PC-9 (cell line): ENCODE measurements at regions of chr6 and their contacts with region 1.

Region 1: GRCh38 chr6:36302227-36302976 is 32.5 kb downstream of the PNPLA1 start:
- DNase-seq: peak; percentile 79 to 81
- H3K4me3 ChIP-seq: no peak overlapping the region
- H3K27ac ChIP-seq: no peak overlapping the region
- H3K4me1 ChIP-seq: peaks cover 9% of the 10 kb centered on the region; the same call in 1 of the 2 replicates
- H3K27me3 ChIP-seq: no peaks in the 10 kb centered on the region
- CTCF ChIP-seq: peak; percentile 93

Region 2: DNA sequence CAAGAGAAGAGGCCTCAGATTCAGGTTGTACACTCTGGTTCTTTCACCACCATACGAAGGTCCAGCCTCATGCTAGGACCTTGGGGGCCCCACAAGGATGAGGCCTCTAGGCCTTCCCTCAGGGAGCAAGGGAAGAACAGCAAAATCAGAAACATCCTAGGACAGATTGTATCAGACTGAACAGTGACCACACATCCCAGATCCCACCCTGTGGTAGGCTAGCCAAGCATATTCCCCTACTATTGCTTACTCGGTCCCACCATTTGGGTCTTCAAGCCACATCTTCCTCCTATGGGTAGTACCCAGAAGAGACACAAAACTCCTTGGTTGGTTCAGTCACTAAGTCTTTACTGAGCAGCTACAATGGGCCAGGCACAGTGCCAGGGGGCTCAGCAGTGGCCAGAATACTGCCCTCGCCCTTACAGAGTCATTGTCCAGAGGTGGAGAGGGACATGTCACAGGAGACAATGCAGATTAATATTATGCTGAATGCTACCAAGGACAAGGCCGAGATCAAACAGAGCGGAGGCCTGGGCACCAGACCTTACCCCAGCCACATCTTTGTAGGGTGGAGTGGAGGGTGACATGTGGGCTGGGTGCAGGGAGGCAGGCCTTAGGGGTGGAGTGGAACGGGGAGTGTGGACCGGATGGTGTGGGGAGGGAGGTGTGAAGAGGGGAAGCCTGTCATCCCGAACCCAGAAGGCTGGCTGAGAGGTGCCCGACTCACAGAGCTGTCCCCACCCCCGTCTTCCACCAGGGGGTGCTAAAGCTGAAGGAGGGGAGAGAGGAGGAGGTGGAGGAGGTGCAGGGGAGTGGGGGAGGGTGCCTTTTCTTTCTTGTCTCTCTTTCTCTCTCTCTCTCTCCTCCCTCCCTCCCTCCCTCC is 178.9 kb before region 1 on chr6:
- CTCF ChIA-PET with region 1: interaction called, 3 read pairs
- POLR2A ChIA-PET with region 1: no interaction called
- intact Hi-C with region 1: loop called (anchors 5 kb)
- DNase-seq: peak; percentile 48 to 75
- H3K4me3 ChIP-seq: no peak overlapping the region
- H3K27ac ChIP-seq: no peak overlapping the region
- H3K4me1 ChIP-seq: peaks cover 84% of the 10 kb centered on the region
- H3K27me3 ChIP-seq: no peaks in the 10 kb centered on the region
- CTCF ChIP-seq: peak; percentile 77

Region 3: GRCh38 chr6:36224904-36225461 is 77.4 kb before region 1 on chr6:
- CTCF ChIA-PET with region 1: no interaction called
- POLR2A ChIA-PET with region 1: no interaction called
- intact Hi-C with region 1: loop called (anchors 5 kb)
- DNase-seq: peak; percentile 43 to 84
- H3K4me3 ChIP-seq: peak overlapping the region; percentile 15; the same call in 1 of the 2 replicates
- H3K27ac ChIP-seq: peak overlapping the region; percentile 52
- H3K4me1 ChIP-seq: peaks cover 57% of the 10 kb centered on the region
- H3K27me3 ChIP-seq: no peaks in the 10 kb centered on the region
- CTCF ChIP-seq: no peak

Region 4: GRCh38 chr6:36360241-36361054 is 58.0 kb after region 1 on chr6:
- CTCF ChIA-PET with region 1: interaction called, 11 read pairs
- POLR2A ChIA-PET with region 1: interaction called, 5 read pairs
- intact Hi-C with region 1: loop called (anchors 1 kb)
- DNase-seq: peak; percentile 43 to 70
- H3K4me3 ChIP-seq: no peak overlapping the region
- H3K27ac ChIP-seq: no peak overlapping the region
- H3K4me1 ChIP-seq: 0 out of 2 replicates have a peak, but pooled peaks cover 7% of the 10 kb centered on the region
- H3K27me3 ChIP-seq: no peaks in the 10 kb centered on the region
- CTCF ChIP-seq: peak; percentile 90

Region 5: DNA sequence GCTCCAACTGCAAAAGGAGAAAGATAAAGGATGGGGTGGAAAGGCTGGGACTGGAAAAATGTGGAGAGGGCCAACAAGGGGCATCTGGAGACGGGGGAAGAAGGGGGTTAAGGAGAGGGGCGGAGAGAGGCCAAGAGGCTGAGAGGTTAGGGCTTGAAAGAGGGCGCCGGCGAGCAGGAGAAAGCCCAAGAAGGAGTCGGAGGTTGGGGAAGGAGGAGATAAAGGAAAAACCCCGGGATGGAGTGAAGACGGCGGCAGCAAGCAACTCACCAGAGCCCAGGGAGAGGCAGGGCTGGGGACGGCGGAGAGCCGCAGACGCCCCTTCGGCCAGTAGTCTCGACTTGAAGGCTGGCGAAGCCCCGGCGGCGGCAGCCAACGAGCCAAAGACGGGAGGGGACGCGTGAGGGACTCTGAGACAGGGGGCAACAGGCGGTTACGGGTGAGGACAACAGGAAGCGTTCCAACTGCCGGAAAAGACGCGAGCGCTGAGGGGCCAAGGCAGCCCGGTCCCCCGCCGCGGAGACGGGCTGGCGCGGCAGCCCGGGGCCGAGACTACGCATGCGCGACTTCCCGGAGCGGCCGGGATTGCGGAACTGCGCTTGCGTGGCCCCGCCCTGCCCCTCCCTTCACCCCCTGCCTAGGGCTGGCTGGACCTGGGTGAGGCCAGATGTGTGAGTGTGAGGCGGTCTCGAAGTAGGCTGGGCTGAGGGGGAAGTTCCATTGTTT is 244.7 kb after region 1 on chr6 and contains the start of gene STK38:
- CTCF ChIA-PET with region 1: interaction called, 14 read pairs
- POLR2A ChIA-PET with region 1: no interaction called
- intact Hi-C with region 1: no loop called
- DNase-seq: peak; percentile 73 to 84
- H3K4me3 ChIP-seq: peak within 1 kb of the TSS; percentile 92
- H3K27ac ChIP-seq: peak within 1 kb of the TSS; percentile 51
- H3K4me1 ChIP-seq: peaks cover 36% of the 10 kb centered on the region
- H3K27me3 ChIP-seq: no peaks in the 10 kb centered on the region
- CTCF ChIP-seq: peak; percentile 32; the same call in 1 of the 2 replicates
- total RNA-seq, gene STK38: 45.7 and 53.3 TPM in 2 replicates